ENCODE measurements at regions of chr10 and their contacts with region 1.

Region 1: GRCh38 chr10:17200912-17201793 is at the start of gene TRDMT1:
- DNase-seq: no peak
- H3K4me3 ChIP-seq: peak within 1 kb of the TSS; percentile 69
- CTCF ChIP-seq: no peak

Region 2: DNA sequence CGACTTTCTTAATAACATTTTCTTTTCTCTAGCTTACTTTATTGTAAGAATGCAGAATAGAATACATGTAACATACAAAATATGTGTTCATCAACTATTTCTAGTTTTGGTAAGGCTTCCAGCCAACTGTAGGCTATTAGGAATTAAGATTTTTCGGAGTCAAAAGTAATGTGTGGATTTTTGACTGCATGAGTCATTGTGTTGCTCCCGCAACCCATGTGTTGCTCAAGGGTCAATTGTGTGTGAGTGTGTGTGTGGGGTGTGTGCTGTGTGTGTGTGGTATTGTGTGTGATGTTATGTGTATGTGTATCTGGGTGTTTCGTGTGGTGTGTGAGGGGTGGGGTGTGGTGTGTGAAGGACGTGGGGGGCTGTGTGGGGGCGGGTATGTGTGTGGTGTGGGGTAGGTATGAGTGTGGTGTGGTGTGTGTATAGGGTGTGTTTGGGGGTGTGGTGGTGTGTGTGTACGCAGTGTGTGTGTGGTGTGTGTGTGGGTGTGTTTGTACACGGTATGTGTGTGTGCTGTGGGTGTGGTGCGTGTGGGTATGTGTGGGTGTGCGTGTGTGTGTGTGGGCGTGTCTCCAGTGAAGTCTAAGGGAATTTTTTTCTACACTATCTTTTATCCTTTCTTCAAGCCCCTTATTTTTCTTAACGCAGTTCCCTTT is 444.5 kb before region 1 on chr10:
- CTCF ChIA-PET with region 1: no interaction called
- POLR2A ChIA-PET with region 1: no interaction called
- DNase-seq: peak; percentile 47
- H3K4me3 ChIP-seq: no peak overlapping the region
- CTCF ChIP-seq: no peak

Region 3: DNA sequence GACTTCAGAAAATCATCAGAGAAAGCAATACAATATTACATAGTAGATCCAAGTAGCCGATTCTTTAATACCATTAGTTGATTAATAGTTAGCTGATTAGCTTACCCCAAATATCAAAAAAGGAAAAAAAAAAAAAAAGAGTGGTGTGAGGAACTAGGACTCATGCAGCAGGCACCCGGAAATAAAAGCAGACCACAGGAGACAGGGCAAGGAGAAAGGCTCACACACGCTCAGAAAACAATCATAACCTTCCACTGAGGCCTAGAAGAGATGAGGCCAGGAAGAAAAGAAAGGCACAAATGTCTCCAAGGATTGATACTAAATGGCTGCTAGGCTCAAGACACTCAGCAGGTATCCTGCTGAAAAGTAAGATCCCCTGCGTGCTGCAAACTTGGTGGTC is 25.6 kb before region 1 on chr10:
- CTCF ChIA-PET with region 1: no interaction called
- POLR2A ChIA-PET with region 1: no interaction called
- DNase-seq: no peak
- H3K4me3 ChIP-seq: no peak overlapping the region
- CTCF ChIP-seq: no peak

Region 4: DNA sequence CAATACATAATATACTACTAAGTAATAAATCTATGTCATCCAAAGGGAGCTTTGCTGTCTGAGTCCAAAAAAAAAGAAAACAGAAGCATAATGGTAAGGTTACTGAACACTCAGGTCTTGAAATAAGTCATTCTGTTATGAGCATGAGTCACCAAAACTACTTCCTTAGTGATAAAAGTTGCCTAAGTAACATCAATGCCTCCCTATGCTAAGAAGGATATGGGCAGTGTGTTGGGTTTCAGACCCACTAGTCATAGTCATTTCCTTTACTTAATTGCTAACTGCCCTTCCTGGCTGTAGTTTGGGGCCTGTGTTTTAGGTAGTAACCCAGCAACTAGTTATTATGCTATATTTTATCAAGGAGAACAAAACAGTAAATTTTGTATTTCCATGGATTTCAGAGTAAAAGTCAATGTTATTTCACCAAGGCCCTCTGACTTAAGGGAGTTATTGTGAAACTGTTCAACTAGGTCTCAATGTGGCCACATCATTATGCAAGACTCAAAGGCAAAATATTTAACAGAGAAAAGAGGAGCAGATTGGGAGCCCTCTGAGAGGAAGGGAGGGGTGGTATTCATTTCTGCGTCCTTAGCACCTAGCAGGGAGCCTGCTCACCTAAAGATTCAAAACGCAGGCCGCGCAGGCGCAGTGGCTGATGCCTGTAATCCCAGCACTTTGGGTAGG is 15.2 kb after region 1 on chr10:
- CTCF ChIA-PET with region 1: interaction called, 8 read pairs
- POLR2A ChIA-PET with region 1: interaction called, 12 read pairs
- DNase-seq: peak; percentile 97
- H3K4me3 ChIP-seq: no peak overlapping the region
- CTCF ChIP-seq: no peak